CD14-positive monocyte (primary cell): ENCODE measurements at regions of chr2 and their contacts with region 1.

Region 1: DNA sequence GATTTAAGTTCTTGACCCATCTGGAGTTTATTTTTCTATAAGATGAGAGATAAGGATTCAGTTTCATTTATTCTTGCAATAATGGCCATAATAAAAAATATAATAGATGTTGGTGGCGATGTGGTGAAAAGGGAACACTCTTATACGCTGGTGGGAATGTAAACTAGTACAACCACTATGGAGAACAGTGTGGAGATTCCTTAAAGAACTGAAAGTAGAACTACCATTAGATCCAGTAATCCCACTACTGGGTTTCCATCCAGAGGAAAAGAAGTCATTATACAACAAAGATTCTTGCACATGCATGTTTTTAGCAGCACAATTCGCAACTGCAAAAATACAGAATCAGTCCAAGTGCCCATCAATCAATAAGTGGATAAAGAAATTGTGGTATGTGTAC is 1040.5 kb upstream of the GYPC start:
- DNase-seq: no peak
- H3K4me3 ChIP-seq: no peak overlapping the region
- H3K4me3 Mint-ChIP-seq: no peak overlapping the region
- H3K27ac ChIP-seq: no peak overlapping the region
- H3K27ac Mint-ChIP-seq: no peak overlapping the region
- H3K4me1 ChIP-seq: no peaks in the 10 kb centered on the region
- H3K4me1 Mint-ChIP-seq: no peaks in the 10 kb centered on the region
- H3K27me3 ChIP-seq: no peaks in the 10 kb centered on the region
- H3K27me3 Mint-ChIP-seq: no peaks in the 10 kb centered on the region
- CTCF ChIP-seq: no peak

Region 2: GRCh38 chr2:125630377-125630776 is 14.9 kb after region 1 on chr2:
- intact Hi-C with region 1: loop called in 1 of 2 experiments (anchors 1 kb)
- DNase-seq: no peak
- H3K4me3 ChIP-seq: no peak overlapping the region
- H3K4me3 Mint-ChIP-seq: no peak overlapping the region
- H3K27ac ChIP-seq: no peak overlapping the region
- H3K27ac Mint-ChIP-seq: no peak overlapping the region
- H3K4me1 ChIP-seq: no peaks in the 10 kb centered on the region
- H3K4me1 Mint-ChIP-seq: no peaks in the 10 kb centered on the region
- H3K27me3 ChIP-seq: no peaks in the 10 kb centered on the region
- H3K27me3 Mint-ChIP-seq: no peaks in the 10 kb centered on the region
- CTCF ChIP-seq: no peak